Heart left ventricle (tissue), 16 donors: ENCODE measurements at regions of chr3 and their contacts with region 1.

Region 1: GRCh38 chr3:149717391-149718056 is 34.8 kb downstream of the COMMD2 start:
- DNase-seq: peak in 3 of 5 donors; percentile 38 to 46 (median 42)
- ATAC-seq: peak in 3 of 4 donors; percentile 57 to 65 (median 59)
- H3K4me3 ChIP-seq: peak overlapping the region in 6 of 12 donors; percentile 0 to 25 (median 14)
- H3K27ac ChIP-seq: peak overlapping the region in 1 of 12 donors; percentile 44
- H3K4me1 ChIP-seq: peaks cover 0 to 5% (median 0%) of the 10 kb centered on the region in 12 donors
- H3K27me3 ChIP-seq: no peaks in the 10 kb centered on the region
- CTCF ChIP-seq: peak; percentile 61 to 83 (median 76)
- POLR2A ChIP-seq: no peak

Region 2: DNA sequence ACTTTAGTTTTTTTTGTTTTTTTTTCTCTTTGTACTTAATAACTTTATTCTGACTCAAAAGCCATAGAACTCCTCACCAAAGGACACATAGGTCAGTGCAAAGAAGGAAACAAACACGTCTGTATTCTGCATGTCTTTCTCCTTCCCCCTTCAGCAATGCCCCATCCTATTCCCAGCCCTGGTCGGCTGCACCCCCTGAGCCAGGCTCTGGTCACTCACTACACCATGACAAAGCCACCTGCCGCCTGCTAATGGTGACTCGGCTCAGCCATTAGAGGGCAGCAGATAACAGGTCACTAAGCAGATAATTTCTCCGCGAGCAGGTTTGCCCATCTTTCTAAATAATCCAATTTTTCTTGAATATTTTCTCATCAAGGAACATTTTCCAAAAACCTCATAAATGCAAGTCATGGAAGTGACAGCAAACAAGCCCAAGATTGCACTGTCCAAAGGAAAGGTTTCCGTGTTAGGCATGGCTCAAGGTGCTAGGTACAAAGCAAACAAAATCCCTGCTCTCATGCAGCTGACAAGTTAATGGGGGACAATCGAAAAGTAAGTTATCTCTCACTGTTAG is 205.2 kb before region 1 on chr3:
- intact Hi-C with region 1: loop called (anchors 1 to 5 kb)
- DNase-seq: peak; percentile 58 to 68 (median 61)
- ATAC-seq: peak; percentile 70 to 88 (median 79)
- H3K4me3 ChIP-seq: no peak overlapping the region
- H3K27ac ChIP-seq: no peak overlapping the region
- H3K4me1 ChIP-seq: peaks cover 0 to 24% (median 4%) of the 10 kb centered on the region in 12 donors
- H3K27me3 ChIP-seq: no peaks in the 10 kb centered on the region
- CTCF ChIP-seq: peak; percentile 70 to 92 (median 84)
- POLR2A ChIP-seq: no peak

Region 3: GRCh38 chr3:149527531-149528339 is 189.8 kb before region 1 on chr3:
- intact Hi-C with region 1: loop called in 8 of 10 experiments (anchors 2 to 5 kb)
- DNase-seq: peak in 3 of 5 donors; percentile 28 to 39 (median 34)
- ATAC-seq: peak; percentile 74 to 79 (median 75)
- H3K4me3 ChIP-seq: no peak overlapping the region
- H3K27ac ChIP-seq: peak overlapping the region in 11 of 12 donors; percentile 5 to 64 (median 44)
- H3K4me1 ChIP-seq: peaks cover 0 to 43% (median 24%) of the 10 kb centered on the region in 12 donors
- H3K27me3 ChIP-seq: no peaks in the 10 kb centered on the region
- CTCF ChIP-seq: peak in 10 of 12 donors; percentile 7 to 61 (median 45)
- POLR2A ChIP-seq: no peak

Region 4: DNA sequence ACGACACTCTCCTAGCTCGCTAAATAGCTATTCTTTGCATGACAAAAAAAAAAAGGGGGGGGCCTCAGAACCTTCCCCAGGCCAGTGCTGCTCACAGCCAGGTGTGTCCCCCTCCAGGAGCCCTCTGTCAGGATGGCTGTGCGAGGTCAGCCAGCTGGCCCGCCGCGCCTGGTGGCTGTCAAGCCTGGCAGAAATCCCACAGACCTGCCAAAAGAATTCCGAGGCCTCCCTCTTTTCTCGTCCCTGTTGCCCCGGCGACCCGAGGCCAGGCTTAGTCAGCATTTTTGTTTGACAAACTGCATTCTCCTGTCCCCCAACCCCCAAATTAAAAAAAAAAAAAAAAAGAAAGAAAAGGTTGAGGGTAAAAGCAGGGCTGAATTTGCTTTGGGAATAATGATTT is 181.1 kb before region 1 on chr3:
- intact Hi-C with region 1: loop called in 2 of 10 experiments (anchors 2 to 5 kb)
- DNase-seq: peak; percentile 75 to 86 (median 80)
- ATAC-seq: peak; percentile 82 to 85 (median 84)
- H3K4me3 ChIP-seq: no peak overlapping the region
- H3K27ac ChIP-seq: peak overlapping the region in 5 of 12 donors; percentile 7 to 63 (median 20)
- H3K4me1 ChIP-seq: peaks cover 0 to 73% (median 43%) of the 10 kb centered on the region in 12 donors
- H3K27me3 ChIP-seq: no peaks in the 10 kb centered on the region
- CTCF ChIP-seq: no peak
- POLR2A ChIP-seq: no peak

Region 5: GRCh38 chr3:149566292-149566975 is 151.1 kb before region 1 on chr3:
- intact Hi-C with region 1: loop called in 2 of 10 experiments (anchors 2 to 5 kb)
- DNase-seq: no peak
- ATAC-seq: peak in 1 of 4 donors; percentile 21
- H3K4me3 ChIP-seq: no peak overlapping the region
- H3K27ac ChIP-seq: peak overlapping the region in 5 of 12 donors; percentile 9 to 33 (median 26)
- H3K4me1 ChIP-seq: peaks cover 0 to 69% (median 24%) of the 10 kb centered on the region in 12 donors
- H3K27me3 ChIP-seq: no peaks in the 10 kb centered on the region
- CTCF ChIP-seq: no peak
- POLR2A ChIP-seq: no peak

Region 6: GRCh38 chr3:149603126-149604074 is 114.1 kb before region 1 on chr3:
- intact Hi-C with region 1: no loop called
- DNase-seq: no peak
- ATAC-seq: no peak
- H3K4me3 ChIP-seq: no peak overlapping the region
- H3K27ac ChIP-seq: no peak overlapping the region
- H3K4me1 ChIP-seq: peaks cover 3 to 78% (median 35%) of the 10 kb centered on the region in 12 donors
- H3K27me3 ChIP-seq: no peaks in the 10 kb centered on the region
- CTCF ChIP-seq: no peak
- POLR2A ChIP-seq: no peak

Region 7: DNA sequence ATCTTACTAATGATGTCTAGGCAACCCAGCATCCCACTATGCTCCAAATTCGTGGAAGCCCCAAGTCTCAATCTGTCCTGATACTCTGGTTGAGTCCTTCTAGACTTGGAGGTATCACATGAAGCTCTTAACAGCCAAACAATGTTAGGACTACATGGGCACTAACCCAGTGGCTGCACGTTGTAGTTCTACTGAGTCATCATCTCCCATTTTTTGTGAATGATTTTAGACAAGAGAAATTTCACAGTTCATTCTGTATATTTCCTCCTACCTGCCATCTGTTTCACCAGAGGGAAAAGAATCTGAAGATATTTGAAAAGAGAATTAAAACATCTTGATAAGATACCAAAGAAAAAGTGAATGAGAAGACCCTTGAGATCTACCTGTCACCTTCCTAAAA is 49.9 kb before region 1 on chr3:
- intact Hi-C with region 1: loop called in 4 of 10 experiments (anchors 5 to 10 kb)
- DNase-seq: no peak
- ATAC-seq: no peak
- H3K4me3 ChIP-seq: no peak overlapping the region
- H3K27ac ChIP-seq: no peak overlapping the region
- H3K4me1 ChIP-seq: no peaks in the 10 kb centered on the region
- H3K27me3 ChIP-seq: no peaks in the 10 kb centered on the region
- CTCF ChIP-seq: no peak
- POLR2A ChIP-seq: no peak